ENCODE measurements at regions of chr2 and their contacts with region 1.

Region 1: DNA sequence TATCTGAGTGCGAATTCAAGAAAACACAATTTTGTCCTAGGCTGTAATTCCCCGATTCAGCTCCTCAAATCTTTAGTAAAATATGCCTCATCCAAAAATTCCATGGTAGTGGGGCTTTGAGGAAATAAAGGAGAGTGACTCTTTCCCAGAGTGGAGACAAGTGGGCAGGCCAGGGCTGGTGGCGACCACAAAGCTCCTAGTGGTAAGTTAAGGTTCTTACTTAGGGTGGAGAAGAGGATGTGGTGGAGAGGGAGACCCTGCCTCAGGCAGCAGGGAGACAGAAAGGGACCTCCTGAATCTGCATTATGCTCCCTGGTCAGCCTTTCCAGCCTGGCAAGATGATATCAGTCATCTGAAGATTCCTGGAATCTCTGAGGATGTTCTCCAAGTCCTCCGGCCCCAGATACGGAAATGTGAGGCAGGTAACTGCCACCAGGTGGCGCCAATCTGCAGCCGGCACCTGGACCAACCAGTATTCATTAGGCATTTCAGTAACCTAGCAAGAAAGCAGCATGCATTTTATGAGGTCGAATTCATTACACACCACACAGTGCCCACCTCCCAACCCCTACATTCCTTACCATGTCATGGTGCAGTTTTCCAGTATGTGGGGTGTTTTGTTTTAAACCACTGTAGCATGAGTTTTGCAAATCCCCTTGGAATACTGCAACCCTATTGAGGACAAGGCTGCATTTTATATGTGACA is 106.4 kb downstream of the POLE4 start:
- DNase-seq: peak; percentile 38
- H3K4me3 ChIP-seq: no peak overlapping the region
- H3K27ac ChIP-seq: no peak overlapping the region
- H3K4me1 ChIP-seq: no peaks in the 10 kb centered on the region
- H3K27me3 ChIP-seq: no peaks in the 10 kb centered on the region
- CTCF ChIP-seq: peak; percentile 89 to 96

Region 2: GRCh38 chr2:74227646-74228045 is 837.2 kb before region 1 on chr2:
- CTCF ChIA-PET with region 1: no interaction called
- dilution Hi-C with region 1: no loop called
- in situ Hi-C with region 1: no loop called
- intact Hi-C with region 1: no loop called
- DNase-seq: no peak
- H3K4me3 ChIP-seq: no peak overlapping the region
- H3K27ac ChIP-seq: no peak overlapping the region
- H3K4me1 ChIP-seq: peaks cover 16% of the 10 kb centered on the region
- H3K27me3 ChIP-seq: no peaks in the 10 kb centered on the region
- CTCF ChIP-seq: no peak

Region 3: GRCh38 chr2:74538881-74539339 is 525.9 kb before region 1 on chr2:
- CTCF ChIA-PET with region 1: no interaction called
- dilution Hi-C with region 1: no loop called
- in situ Hi-C with region 1: no loop called
- intact Hi-C with region 1: no loop called
- DNase-seq: no peak
- H3K4me3 ChIP-seq: no peak overlapping the region
- H3K27ac ChIP-seq: no peak overlapping the region
- H3K4me1 ChIP-seq: peaks cover 13% of the 10 kb centered on the region
- H3K27me3 ChIP-seq: no peaks in the 10 kb centered on the region
- CTCF ChIP-seq: no peak

Region 4: GRCh38 chr2:74658516-74658915 is 406.3 kb before region 1 on chr2:
- CTCF ChIA-PET with region 1: no interaction called
- dilution Hi-C with region 1: no loop called
- in situ Hi-C with region 1: no loop called
- intact Hi-C with region 1: no loop called
- DNase-seq: no peak
- H3K4me3 ChIP-seq: no peak overlapping the region
- H3K27ac ChIP-seq: no peak overlapping the region
- H3K4me1 ChIP-seq: peaks cover 9% of the 10 kb centered on the region
- H3K27me3 ChIP-seq: no peaks in the 10 kb centered on the region
- CTCF ChIP-seq: no peak

Region 5: GRCh38 chr2:75146606-75147332 is 81.9 kb after region 1 on chr2:
- CTCF ChIA-PET with region 1: no interaction called
- dilution Hi-C with region 1: no loop called
- in situ Hi-C with region 1: no loop called
- intact Hi-C with region 1: loop called (anchors 10 kb)
- DNase-seq: no peak
- H3K4me3 ChIP-seq: no peak overlapping the region
- H3K27ac ChIP-seq: no peak overlapping the region
- H3K4me1 ChIP-seq: no peaks in the 10 kb centered on the region
- H3K27me3 ChIP-seq: no peaks in the 10 kb centered on the region
- CTCF ChIP-seq: no peak

Region 6: DNA sequence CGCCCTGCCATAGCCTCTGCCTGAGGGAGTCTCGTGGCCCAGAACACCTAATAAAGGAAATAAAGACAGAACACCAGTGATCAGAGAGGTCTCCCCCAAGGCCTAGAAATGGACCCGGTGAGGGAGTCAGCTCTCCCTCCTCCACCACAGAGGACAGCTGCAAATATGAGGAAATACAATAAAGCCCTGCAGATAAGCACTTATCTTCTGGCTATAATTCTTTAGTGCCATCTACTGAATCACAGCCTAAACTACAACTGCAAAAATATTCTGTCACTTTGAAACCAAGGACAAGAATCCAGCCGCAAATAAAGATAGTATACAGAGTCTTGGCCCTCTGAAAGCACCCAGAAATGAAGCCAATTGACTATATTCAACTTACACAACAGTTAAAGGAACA is 176.9 kb after region 1 on chr2:
- CTCF ChIA-PET with region 1: interaction called, 3 read pairs
- dilution Hi-C with region 1: no loop called
- in situ Hi-C with region 1: no loop called
- intact Hi-C with region 1: loop called (anchors 1 kb)
- DNase-seq: peak; percentile 5
- H3K4me3 ChIP-seq: no peak overlapping the region
- H3K27ac ChIP-seq: no peak overlapping the region
- H3K4me1 ChIP-seq: no peaks in the 10 kb centered on the region
- H3K27me3 ChIP-seq: no peaks in the 10 kb centered on the region
- CTCF ChIP-seq: peak; percentile 26 to 35

Region 7: DNA sequence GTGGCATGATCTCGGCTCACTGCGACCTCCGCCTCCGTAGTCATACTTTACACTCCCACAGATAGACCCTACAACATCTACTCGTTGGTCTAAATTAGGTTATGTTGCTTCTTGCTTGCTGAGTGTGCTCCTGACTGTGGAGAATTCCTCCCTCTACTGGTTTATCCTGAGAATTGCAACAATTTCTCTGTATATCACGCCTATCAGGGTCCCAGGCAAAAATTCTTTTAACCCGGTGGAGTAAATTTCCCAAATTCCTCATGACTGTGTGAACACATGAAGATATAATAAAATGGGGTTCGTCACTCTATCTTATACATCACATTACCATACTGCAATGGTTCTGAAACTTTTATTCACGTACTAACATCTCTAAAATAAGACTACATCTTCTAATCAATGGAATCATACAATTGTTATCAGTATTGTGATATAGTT is 339.2 kb after region 1 on chr2:
- CTCF ChIA-PET with region 1: no interaction called
- dilution Hi-C with region 1: no loop called
- in situ Hi-C with region 1: no loop called
- intact Hi-C with region 1: loop called (anchors 1 kb)
- DNase-seq: peak; percentile 35
- H3K4me3 ChIP-seq: no peak overlapping the region
- H3K27ac ChIP-seq: no peak overlapping the region
- H3K4me1 ChIP-seq: no peaks in the 10 kb centered on the region
- H3K27me3 ChIP-seq: peaks cover 3% of the 10 kb centered on the region
- CTCF ChIP-seq: peak; percentile 76 to 85

Region 8: DNA sequence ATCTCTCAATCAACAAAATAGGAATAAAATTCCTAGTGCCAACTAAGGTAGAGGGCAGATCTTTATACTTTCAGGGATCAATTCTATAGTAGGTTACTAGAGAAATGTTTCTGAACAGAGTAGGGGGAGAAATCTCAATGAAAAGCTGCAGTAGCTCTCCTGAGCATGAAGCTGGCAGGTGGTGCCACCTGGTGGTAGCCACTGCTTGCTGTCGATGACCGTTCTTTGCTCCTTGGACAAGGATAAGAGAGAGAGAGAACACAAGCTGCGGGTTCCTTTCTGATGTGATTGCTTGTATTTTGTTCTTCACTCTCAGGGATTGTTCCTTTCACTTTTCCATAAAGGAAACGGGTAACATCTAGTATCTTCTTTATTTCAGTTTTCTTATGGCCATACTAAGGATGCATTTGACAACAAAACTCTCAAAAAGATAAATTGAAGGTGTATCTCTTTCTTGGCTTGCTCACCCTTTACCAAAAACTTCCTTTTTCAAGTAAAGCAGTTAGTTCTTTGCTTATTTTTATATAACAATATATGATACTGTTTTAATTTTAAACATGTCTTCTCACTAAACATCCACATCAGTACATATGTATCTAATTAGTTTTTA is 563.2 kb after region 1 on chr2:
- CTCF ChIA-PET with region 1: no interaction called
- dilution Hi-C with region 1: no loop called
- in situ Hi-C with region 1: no loop called
- intact Hi-C with region 1: loop called (anchors 10 kb)
- DNase-seq: peak; percentile 59
- H3K4me3 ChIP-seq: no peak overlapping the region
- H3K27ac ChIP-seq: no peak overlapping the region
- H3K4me1 ChIP-seq: peaks cover 7% of the 10 kb centered on the region
- H3K27me3 ChIP-seq: no peaks in the 10 kb centered on the region
- CTCF ChIP-seq: peak; percentile 97 to 98

Measured in mammary epithelial cell (primary cell).